Ovary (tissue), 10 donors: ENCODE measurements at regions of chr4 and their contacts with region 1.

Region 1: GRCh38 chr4:68304731-68305130 is 45.2 kb downstream of the YTHDC1 start:
- DNase-seq: no peak
- H3K4me3 ChIP-seq: no peak overlapping the region
- H3K27ac ChIP-seq: no peak overlapping the region
- H3K4me1 ChIP-seq: no peaks in the 10 kb centered on the region
- H3K27me3 ChIP-seq: no peaks in the 10 kb centered on the region
- CTCF ChIP-seq: no peak
- EP300 ChIP-seq: no peak
- POLR2A ChIP-seq: no peak

Region 2: DNA sequence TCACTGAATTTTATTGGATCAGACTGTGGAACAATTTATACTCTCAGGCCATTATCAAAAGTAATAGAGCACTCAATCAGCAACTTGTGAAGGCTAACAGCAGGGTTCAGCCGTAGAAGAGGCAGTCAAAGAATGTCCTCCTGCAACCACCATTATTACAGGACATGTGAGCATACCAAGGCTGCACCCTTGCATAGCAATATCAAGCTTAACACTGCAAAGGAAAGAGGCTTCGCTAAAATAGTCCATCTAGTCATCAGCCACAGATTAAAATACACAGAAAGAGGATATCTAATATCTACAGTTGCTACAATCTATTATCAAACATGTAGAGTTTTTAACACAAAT is 16.4 kb before region 1 on chr4:
- intact Hi-C with region 1: loop called in 1 of 4 experiments (anchors 1 kb)
- DNase-seq: no peak
- H3K4me3 ChIP-seq: no peak overlapping the region
- H3K27ac ChIP-seq: no peak overlapping the region
- H3K4me1 ChIP-seq: no peaks in the 10 kb centered on the region
- H3K27me3 ChIP-seq: no peaks in the 10 kb centered on the region
- CTCF ChIP-seq: no peak
- EP300 ChIP-seq: no peak
- POLR2A ChIP-seq: no peak